ENCODE measurements at regions of chr3 and their contacts with region 1.

Region 1: DNA sequence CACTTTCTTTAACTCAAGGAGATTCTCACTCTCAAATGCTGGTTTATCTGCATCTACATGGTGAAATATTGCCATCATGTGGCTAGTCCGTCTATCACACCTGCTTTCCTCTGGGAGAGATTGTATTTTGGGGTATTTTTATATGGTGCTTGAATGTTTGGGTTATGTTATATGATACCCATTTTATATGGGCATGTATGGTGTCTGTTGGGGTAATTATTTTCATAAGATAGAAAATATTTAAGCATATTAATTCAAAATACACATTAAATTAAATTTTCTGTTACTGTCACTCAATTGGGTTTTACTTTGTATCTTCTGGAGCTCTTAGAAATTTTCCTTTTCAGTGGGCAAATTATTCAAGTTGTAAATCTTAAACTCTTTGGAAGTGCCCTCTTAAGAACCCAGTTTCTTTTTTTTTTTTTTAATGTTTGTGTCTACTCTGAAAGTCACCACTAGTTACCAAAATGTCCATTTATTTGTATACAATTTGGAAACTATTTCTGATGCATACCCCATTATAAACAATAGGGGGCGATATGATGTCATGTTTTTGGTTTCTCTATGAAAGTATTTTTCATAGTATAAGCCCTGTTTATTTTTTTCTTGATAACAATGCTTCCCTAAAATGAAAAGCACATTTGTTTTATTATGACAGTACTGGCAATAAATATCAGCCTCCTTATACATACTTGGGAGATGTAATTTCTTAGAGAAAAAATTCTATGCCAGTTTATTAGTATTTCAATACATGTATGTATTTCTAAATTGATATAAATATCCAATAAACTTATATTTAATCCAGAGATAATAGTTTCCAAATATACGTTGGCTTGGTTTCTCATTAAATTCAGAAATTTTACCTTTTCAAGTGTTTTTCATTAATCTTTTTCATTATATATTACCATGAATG is 36.1 kb upstream of the PLSCR5 start:
- DNase-seq: no peak
- H3K4me3 Mint-ChIP-seq: no peak overlapping the region
- H3K27ac Mint-ChIP-seq: no peak overlapping the region
- H3K4me1 Mint-ChIP-seq: no peaks in the 10 kb centered on the region
- H3K27me3 Mint-ChIP-seq: no peaks in the 10 kb centered on the region

Region 2: DNA sequence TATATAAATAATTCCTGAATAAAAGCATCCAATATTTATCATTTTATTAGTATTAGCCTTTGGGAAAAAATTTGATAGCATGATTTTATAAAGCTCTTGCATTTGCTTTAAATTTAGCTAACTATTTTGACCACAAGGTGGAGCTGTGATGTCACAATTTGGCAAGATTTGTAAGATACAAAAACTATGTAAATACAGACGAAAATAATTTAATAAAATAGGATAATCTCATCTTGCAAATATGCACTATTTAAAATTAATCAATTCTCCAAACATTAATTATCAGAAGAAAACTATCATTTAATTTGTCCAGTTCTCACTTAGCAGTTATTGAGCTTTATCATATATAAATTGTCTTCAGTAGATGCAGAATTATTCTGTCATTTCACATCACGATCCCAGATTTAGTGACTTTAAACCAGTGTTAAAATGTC is 575.6 kb before region 1 on chr3:
- CTCF ChIA-PET with region 1: no interaction called
- POLR2A ChIA-PET with region 1: no interaction called
- intact Hi-C with region 1: loop called (anchors 5 kb)
- DNase-seq: no peak
- H3K4me3 Mint-ChIP-seq: no peak overlapping the region
- H3K27ac Mint-ChIP-seq: no peak overlapping the region
- H3K4me1 Mint-ChIP-seq: no peaks in the 10 kb centered on the region
- H3K27me3 Mint-ChIP-seq: no peaks in the 10 kb centered on the region

Region 3: DNA sequence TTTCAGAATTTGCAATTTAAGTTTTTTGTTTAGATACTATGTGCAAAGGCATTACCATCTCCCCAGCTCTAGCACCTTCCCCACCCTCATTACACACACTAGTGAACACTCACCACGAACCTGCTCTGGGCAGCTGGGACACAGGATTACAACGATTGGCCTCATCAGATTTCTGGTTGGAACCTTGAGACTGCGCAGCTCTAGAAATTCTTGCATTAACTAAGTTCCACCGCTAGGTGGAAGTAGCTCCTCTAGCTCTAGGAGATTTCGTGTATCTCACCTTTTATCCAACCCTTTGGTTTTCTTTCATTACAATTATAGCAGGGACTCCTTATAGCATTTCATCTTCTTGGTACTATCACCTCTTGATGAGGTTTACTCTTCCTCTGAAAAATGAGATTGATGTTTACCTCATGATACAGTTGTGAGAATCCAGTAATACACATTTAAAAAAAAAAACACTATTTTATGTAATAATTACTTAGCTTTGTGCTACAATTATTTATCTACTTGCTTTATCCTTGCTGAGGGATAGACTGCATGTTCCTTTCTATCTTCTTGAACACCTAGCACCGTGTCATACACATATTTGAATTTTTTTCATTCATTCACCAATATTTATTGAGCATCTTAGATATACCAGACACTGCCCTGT is 451.6 kb before region 1 on chr3:
- CTCF ChIA-PET with region 1: interaction called, 9 read pairs
- POLR2A ChIA-PET with region 1: no interaction called
- intact Hi-C with region 1: loop called (anchors 1 kb)
- DNase-seq: no peak
- H3K4me3 Mint-ChIP-seq: no peak overlapping the region
- H3K27ac Mint-ChIP-seq: no peak overlapping the region
- H3K4me1 Mint-ChIP-seq: no peaks in the 10 kb centered on the region
- H3K27me3 Mint-ChIP-seq: peaks cover 3% of the 10 kb centered on the region

Region 4: GRCh38 chr3:146218880-146219866 is 422.0 kb before region 1 on chr3:
- CTCF ChIA-PET with region 1: no interaction called
- POLR2A ChIA-PET with region 1: no interaction called
- intact Hi-C with region 1: loop called (anchors 1 kb)
- DNase-seq: peak; percentile 25
- H3K4me3 Mint-ChIP-seq: no peak overlapping the region
- H3K27ac Mint-ChIP-seq: no peak overlapping the region
- H3K4me1 Mint-ChIP-seq: no peaks in the 10 kb centered on the region
- H3K27me3 Mint-ChIP-seq: peaks cover 5% of the 10 kb centered on the region

Region 5: GRCh38 chr3:146589899-146590508 is 51.2 kb before region 1 on chr3:
- CTCF ChIA-PET with region 1: interaction called, 5 read pairs
- POLR2A ChIA-PET with region 1: no interaction called
- intact Hi-C with region 1: loop called (anchors 1 kb)
- DNase-seq: no peak
- H3K4me3 Mint-ChIP-seq: no peak overlapping the region
- H3K27ac Mint-ChIP-seq: no peak overlapping the region
- H3K4me1 Mint-ChIP-seq: no peaks in the 10 kb centered on the region
- H3K27me3 Mint-ChIP-seq: peaks cover 2% of the 10 kb centered on the region

Region 6: GRCh38 chr3:147191795-147192385 is 550.7 kb after region 1 on chr3:
- CTCF ChIA-PET with region 1: no interaction called
- POLR2A ChIA-PET with region 1: no interaction called
- intact Hi-C with region 1: loop called (anchors 2 kb)
- DNase-seq: no peak
- H3K4me3 Mint-ChIP-seq: no peak overlapping the region
- H3K27ac Mint-ChIP-seq: no peak overlapping the region
- H3K4me1 Mint-ChIP-seq: no peaks in the 10 kb centered on the region
- H3K27me3 Mint-ChIP-seq: no peaks in the 10 kb centered on the region